ENCODE measurements at regions of chr18 and their contacts with region 1.

Region 1: DNA sequence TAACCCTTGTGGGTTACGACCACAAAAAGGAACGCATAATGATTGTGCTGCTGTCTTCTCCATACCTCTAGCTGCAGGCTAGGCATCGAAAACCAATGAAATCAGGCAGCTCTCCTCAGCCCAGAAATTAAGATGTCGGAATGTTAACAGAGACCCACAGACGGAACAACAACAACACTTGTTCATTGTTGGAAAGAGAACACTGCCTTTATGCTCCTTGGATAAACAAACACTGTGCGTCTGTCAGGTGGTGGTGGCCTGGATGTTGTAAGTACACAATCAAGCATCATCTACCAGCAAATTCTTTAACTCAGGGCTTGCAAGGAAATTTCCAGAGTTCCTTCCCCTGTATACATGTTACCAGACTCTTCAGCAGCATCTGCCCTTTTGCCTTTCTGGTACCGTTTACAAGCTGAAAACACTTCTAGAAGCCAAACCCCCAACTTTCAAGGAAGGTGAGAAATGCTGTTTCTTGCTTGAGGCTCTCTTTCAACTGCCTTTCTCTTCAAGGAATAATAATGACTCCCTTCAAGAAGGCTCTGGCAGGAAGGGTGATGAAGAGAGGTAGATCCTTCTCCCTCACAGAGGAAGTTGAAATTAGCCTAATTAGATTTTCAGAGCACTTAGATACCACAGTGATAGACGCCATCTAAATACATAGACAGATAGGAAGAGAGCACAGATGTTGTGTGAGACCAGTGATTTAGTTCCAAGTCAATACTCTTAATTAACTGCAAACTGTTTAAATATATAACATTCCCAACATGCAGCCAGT is 332.7 kb downstream of the ZNF521 start:
- DNase-seq: no peak
- ATAC-seq: no peak
- H3K4me3 ChIP-seq: no peak overlapping the region
- H3K27ac ChIP-seq: no peak overlapping the region
- H3K4me1 ChIP-seq: no peaks in the 10 kb centered on the region
- H3K27me3 ChIP-seq: no peaks in the 10 kb centered on the region

Region 2: DNA sequence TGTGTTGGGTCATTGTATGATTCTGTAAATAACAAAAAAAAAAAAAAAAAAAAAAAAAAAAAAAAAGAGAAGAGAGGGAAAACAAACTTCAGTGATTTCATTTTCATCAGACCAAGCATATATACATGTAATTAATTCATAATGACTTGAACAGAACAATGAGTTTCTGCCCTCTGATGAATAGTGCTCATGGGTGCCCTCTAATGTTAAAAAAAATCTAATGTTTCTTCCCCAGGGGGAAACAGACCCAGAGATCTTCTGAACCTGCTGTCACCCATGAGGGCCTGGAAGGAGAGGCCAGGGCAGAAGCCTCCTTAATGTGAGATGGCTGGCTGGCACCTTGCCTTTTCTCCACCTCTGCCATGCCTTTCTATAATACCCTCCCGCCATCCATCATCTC is 43.4 kb after region 1 on chr18:
- intact Hi-C with region 1: loop called in 1 of 4 experiments (anchors 10 kb)
- DNase-seq: no peak
- ATAC-seq: no peak
- H3K4me3 ChIP-seq: no peak overlapping the region
- H3K27ac ChIP-seq: no peak overlapping the region
- H3K4me1 ChIP-seq: no peaks in the 10 kb centered on the region
- H3K27me3 ChIP-seq: no peaks in the 10 kb centered on the region

Measured in right cardiac atrium (tissue), 5 donors.